ENCODE measurements at regions of chr6 and their contacts with region 1.

Region 1: GRCh38 chr6:10800829-10801535 is 37.4 kb downstream of the MAK start:
- DNase-seq: peak in 34 of 35 experiments; percentile 5 to 74 (median 48)
- ATAC-seq: peak; percentile 72 to 81 (median 74)
- H3K4me3 ChIP-seq: no peak overlapping the region
- H3K4me3 Mint-ChIP-seq: no peak overlapping the region
- H3K27ac ChIP-seq: no peak overlapping the region
- H3K27ac Mint-ChIP-seq: no peak overlapping the region
- H3K4me1 ChIP-seq: no peaks in the 10 kb centered on the region
- H3K4me1 Mint-ChIP-seq: no peaks in the 10 kb centered on the region
- H3K27me3 ChIP-seq: no peaks in the 10 kb centered on the region
- H3K27me3 Mint-ChIP-seq: no peaks in the 10 kb centered on the region

Region 2: GRCh38 chr6:10510592-10511367 is 290.2 kb before region 1 on chr6:
- CTCF ChIA-PET with region 1: interaction called, 5 to 16 read pairs
- POLR2A ChIA-PET with region 1: interaction called in 1 of 2 experiments, 6 read pairs
- DNase-seq: peak in 30 of 35 experiments; percentile 6 to 54 (median 23)
- ATAC-seq: peak; percentile 43 to 74 (median 66)
- H3K4me3 ChIP-seq: no peak overlapping the region
- H3K4me3 Mint-ChIP-seq: no peak overlapping the region
- H3K27ac ChIP-seq: no peak overlapping the region
- H3K27ac Mint-ChIP-seq: no peak overlapping the region
- H3K4me1 ChIP-seq: no peaks in the 10 kb centered on the region
- H3K4me1 Mint-ChIP-seq: peaks cover 3 to 6% (median 5%) of the 10 kb centered on the region in 3 donors
- H3K27me3 ChIP-seq: no peaks in the 10 kb centered on the region
- H3K27me3 Mint-ChIP-seq: peaks cover 0 to 2% of the 10 kb centered on the region in 2 donors

Region 3: GRCh38 chr6:11309947-11310665 is 509.1 kb after region 1 on chr6:
- CTCF ChIA-PET with region 1: no interaction called
- POLR2A ChIA-PET with region 1: no interaction called
- DNase-seq: peak in 1 of 35 experiments; percentile 7
- ATAC-seq: no peak
- H3K4me3 ChIP-seq: no peak overlapping the region
- H3K4me3 Mint-ChIP-seq: no peak overlapping the region
- H3K27ac ChIP-seq: no peak overlapping the region
- H3K27ac Mint-ChIP-seq: no peak overlapping the region
- H3K4me1 ChIP-seq: no peaks in the 10 kb centered on the region
- H3K4me1 Mint-ChIP-seq: peaks cover 9 to 25% (median 16%) of the 10 kb centered on the region in 3 donors
- H3K27me3 ChIP-seq: no peaks in the 10 kb centered on the region
- H3K27me3 Mint-ChIP-seq: no peaks in the 10 kb centered on the region

Measured in T-cell (primary cell).